Naive thymus-derived CD4-positive, alpha-beta T cell (primary cell): ENCODE measurements at regions of chr6 and their contacts with region 1.

Region 1: DNA sequence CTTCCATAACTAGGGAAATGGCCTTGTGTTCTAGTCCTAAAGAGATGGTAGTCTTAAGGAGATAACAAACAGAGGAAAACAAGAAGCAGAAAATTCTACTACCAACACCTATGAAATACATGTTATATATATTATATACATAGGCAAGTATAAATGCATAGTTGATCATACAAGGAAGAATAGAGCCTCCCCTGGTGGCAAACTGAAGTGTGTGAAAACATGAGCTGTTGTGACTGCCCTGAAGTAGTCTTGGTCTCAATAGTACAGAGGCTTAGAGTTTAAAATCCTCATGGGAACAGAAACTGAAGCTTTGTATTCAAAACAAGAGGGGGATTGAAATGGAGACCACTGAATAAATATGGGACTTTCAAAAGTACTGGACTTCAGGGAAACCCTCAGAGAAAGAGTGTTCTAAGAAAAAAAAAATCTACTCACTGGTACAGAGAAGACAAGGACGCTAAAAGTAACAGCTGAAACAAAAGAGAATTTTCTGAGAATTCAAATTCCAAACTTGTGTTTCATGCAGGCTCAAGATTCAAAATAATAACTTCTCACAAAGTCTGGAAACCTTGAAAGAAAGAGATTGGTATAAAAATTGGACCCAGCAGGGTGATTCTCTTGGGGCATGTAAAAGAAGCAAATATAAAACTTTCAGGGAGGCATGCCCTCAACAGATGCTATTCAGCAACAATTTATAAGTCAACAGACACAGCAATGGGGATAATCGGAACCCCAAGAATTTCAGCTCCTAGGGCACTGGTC is 59.7 kb upstream of the SAMD3 start:
- DNase-seq: peak in 7 of 9 donors; percentile 8 to 54 (median 43)
- ATAC-seq: peak; percentile 84
- H3K4me3 ChIP-seq: no peak overlapping the region
- H3K4me3 Mint-ChIP-seq: no peak overlapping the region
- H3K27ac ChIP-seq: no peak overlapping the region
- H3K27ac Mint-ChIP-seq: peak overlapping the region in 6 of 9 donors; percentile 12 to 66 (median 49)
- H3K4me1 ChIP-seq: no peaks in the 10 kb centered on the region
- H3K4me1 Mint-ChIP-seq: peaks cover 7 to 18% (median 14%) of the 10 kb centered on the region in 7 donors
- H3K27me3 ChIP-seq: no peaks in the 10 kb centered on the region
- H3K27me3 Mint-ChIP-seq: peaks cover 0 to 4% (median 0%) of the 10 kb centered on the region in 5 donors

Region 2: GRCh38 chr6:129498950-129499842 is 783.2 kb before region 1 on chr6:
- CTCF ChIA-PET with region 1: interaction called, 3 read pairs
- POLR2A ChIA-PET with region 1: no interaction called
- intact Hi-C with region 1: loop called in 1 of 2 experiments (anchors 10 kb)
- DNase-seq: peak in 7 of 9 donors; percentile 25 to 60 (median 52)
- ATAC-seq: peak; percentile 82
- H3K4me3 ChIP-seq: peak overlapping the region; percentile 37
- H3K4me3 Mint-ChIP-seq: peak overlapping the region; percentile 23 to 81 (median 64)
- H3K27ac ChIP-seq: no peak overlapping the region
- H3K27ac Mint-ChIP-seq: peak overlapping the region in 7 of 9 donors; percentile 0 to 62 (median 2)
- H3K4me1 ChIP-seq: peaks cover 0 to 5% of the 10 kb centered on the region in 2 donors
- H3K4me1 Mint-ChIP-seq: peaks cover 9 to 43% (median 18%) of the 10 kb centered on the region in 7 donors
- H3K27me3 ChIP-seq: no peaks in the 10 kb centered on the region
- H3K27me3 Mint-ChIP-seq: no peaks in the 10 kb centered on the region

Region 3: DNA sequence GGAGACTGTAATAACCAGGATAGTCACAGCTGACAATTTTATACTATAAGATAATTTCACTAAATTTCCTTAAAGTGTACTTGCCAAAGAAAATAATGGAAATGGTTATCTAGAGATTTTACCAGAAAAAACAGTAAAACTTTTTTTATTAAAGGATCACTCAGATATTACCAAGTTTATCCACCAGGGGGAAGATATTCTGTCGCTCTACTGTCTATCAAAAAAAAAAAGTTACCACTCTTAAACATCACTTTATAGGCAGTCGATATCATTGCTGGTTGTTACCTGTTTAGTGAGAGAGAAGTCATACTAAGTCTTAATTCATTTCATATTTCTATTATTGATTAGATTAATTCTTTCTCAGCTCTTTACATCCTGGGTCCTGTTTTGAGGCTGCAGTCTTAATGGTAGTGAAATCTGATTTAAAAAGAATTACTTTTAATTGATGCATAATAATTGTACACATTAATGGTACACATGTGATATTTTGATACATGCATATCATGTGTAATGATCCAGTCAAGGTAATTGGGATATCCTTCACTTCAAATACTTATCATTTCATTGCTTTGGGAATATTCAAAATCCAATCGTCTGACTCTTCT is 245.1 kb before region 1 on chr6:
- CTCF ChIA-PET with region 1: interaction called, 3 read pairs
- POLR2A ChIA-PET with region 1: no interaction called
- intact Hi-C with region 1: loop called (anchors 1 kb)
- DNase-seq: peak in 4 of 9 donors; percentile 18 to 41 (median 34)
- ATAC-seq: peak; percentile 68
- H3K4me3 ChIP-seq: no peak overlapping the region
- H3K4me3 Mint-ChIP-seq: no peak overlapping the region
- H3K27ac ChIP-seq: no peak overlapping the region
- H3K27ac Mint-ChIP-seq: peak overlapping the region in 1 of 9 donors; percentile 10
- H3K4me1 ChIP-seq: peaks cover 0 to 5% of the 10 kb centered on the region in 2 donors
- H3K4me1 Mint-ChIP-seq: peaks cover 31 to 90% (median 74%) of the 10 kb centered on the region in 7 donors
- H3K27me3 ChIP-seq: no peaks in the 10 kb centered on the region
- H3K27me3 Mint-ChIP-seq: no peaks in the 10 kb centered on the region

Region 4: GRCh38 chr6:130076512-130076911 is 205.9 kb before region 1 on chr6:
- CTCF ChIA-PET with region 1: interaction called, 25 read pairs
- POLR2A ChIA-PET with region 1: no interaction called
- intact Hi-C with region 1: loop called (anchors 1 kb)
- DNase-seq: peak in 5 of 9 donors; percentile 7 to 36 (median 27)
- ATAC-seq: no peak
- H3K4me3 ChIP-seq: no peak overlapping the region
- H3K4me3 Mint-ChIP-seq: peak overlapping the region in 1 of 10 donors; percentile 37
- H3K27ac ChIP-seq: no peak overlapping the region
- H3K27ac Mint-ChIP-seq: no peak overlapping the region
- H3K4me1 ChIP-seq: no peaks in the 10 kb centered on the region
- H3K4me1 Mint-ChIP-seq: peaks cover 12 to 31% (median 23%) of the 10 kb centered on the region in 7 donors
- H3K27me3 ChIP-seq: no peaks in the 10 kb centered on the region
- H3K27me3 Mint-ChIP-seq: no peaks in the 10 kb centered on the region

Region 5: GRCh38 chr6:130223508-130223907 is 58.9 kb before region 1 on chr6:
- CTCF ChIA-PET with region 1: interaction called, 7 read pairs
- POLR2A ChIA-PET with region 1: interaction called, 3 read pairs
- intact Hi-C with region 1: loop called (anchors 2 to 5 kb)
- DNase-seq: peak in 8 of 9 donors; percentile 38 to 65 (median 52)
- ATAC-seq: peak; percentile 89
- H3K4me3 ChIP-seq: peak overlapping the region; percentile 19
- H3K4me3 Mint-ChIP-seq: peak overlapping the region; percentile 4 to 93 (median 80)
- H3K27ac ChIP-seq: peak overlapping the region; percentile 57
- H3K27ac Mint-ChIP-seq: peak overlapping the region; percentile 89 to 97 (median 94)
- H3K4me1 ChIP-seq: peaks cover 16 to 20% of the 10 kb centered on the region in 2 donors
- H3K4me1 Mint-ChIP-seq: peaks cover 10 to 47% (median 39%) of the 10 kb centered on the region in 7 donors
- H3K27me3 ChIP-seq: no peaks in the 10 kb centered on the region
- H3K27me3 Mint-ChIP-seq: no peaks in the 10 kb centered on the region